Pancreas (tissue), 10 donors: ENCODE measurements at regions of chr1 and their contacts with region 1.

Region 1: GRCh38 chr1:110209715-110210603 is at the start of gene KCNC4:
- DNase-seq: peak; percentile 89 to 94 (median 92)
- ATAC-seq: peak; percentile 76 to 84 (median 80)
- H3K4me3 ChIP-seq: peak within 1 kb of the TSS; percentile 68 to 85 (median 77)
- H3K27ac ChIP-seq: peak within 1 kb of the TSS; percentile 84 to 96 (median 90)
- H3K4me1 ChIP-seq: peaks cover 33 to 41% (median 33%) of the 10 kb centered on the region in 3 donors
- H3K27me3 ChIP-seq: no peaks in the 10 kb centered on the region
- CTCF ChIP-seq: no peak
- total RNA-seq, gene KCNC4: 7.8 to 18.6 (median 10.5) TPM

Region 2: DNA sequence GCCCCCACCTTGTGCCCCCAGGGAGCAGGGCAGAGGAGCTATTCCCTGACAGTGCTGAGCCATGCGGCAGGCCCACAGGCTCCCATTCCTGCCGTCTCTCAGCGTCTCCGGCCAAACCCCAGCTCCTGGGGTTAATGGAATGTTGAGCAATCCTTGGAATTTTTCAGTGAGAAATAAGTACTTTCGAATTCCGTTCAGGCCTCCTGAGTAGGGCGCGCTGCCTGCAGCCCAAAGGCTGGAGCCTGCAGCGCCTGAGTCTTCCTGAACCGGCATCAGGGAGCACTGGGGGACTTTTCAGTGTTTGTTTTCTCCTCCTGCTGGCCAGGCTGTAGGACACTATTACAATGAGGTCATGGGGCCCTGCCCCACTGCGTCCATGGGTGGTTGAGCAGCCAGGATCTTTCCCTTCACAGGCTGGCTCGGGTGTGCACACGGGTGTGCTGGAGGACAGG is 332.6 kb before region 1 on chr1:
- intact Hi-C with region 1: no loop called
- DNase-seq: peak in 3 of 6 donors; percentile 27 to 46 (median 39)
- ATAC-seq: peak; percentile 65 to 88 (median 76)
- H3K4me3 ChIP-seq: no peak overlapping the region
- H3K27ac ChIP-seq: peak overlapping the region; percentile 61 to 80 (median 72)
- H3K4me1 ChIP-seq: no peaks in the 10 kb centered on the region
- H3K27me3 ChIP-seq: no peaks in the 10 kb centered on the region
- CTCF ChIP-seq: no peak

Region 3: DNA sequence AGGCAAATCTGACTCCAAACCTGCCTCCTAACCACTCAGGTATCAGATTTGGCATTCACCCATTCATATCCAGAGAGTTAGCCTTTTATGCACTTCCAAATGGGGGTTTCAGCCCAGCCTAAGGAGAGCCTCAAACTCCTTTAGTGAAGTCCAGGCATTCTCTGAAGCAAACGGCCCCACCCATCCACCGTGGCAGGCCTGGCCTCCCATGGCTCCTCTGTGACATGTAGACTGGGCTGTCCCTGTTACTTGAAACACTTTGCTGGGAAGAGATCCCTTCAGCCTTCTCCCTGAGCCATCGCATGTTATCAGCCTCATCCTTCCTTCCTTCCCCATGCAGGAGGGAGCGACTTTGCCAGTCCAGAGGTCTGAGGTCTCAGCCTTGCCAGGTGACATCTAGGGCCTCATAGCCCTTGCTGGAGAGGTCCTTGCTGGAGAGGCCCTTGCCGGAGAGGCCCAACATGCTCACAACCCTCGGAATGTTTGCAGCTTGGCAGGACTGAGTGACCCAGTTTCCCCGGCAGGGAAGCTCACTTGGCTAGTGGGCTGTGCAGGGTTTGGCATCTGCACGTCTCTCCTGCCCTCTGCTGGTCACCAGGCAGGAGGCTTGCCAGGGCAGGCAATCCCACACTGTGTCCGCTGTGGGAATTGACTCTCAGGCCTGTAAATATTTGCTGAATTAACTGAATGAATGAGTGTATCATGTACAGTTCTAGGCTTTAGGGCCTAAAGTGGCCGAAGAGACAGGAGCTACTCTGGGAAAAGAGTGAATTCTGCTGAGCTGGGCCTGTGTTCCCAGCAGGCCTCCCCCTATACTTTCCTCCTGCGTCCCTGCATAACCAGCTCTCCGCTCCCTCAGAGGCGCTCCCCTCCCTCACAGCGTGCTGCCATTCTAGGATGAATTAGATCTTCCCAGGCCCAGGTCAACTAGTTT is 102.5 kb after region 1 on chr1:
- intact Hi-C with region 1: loop called in 2 of 3 experiments (anchors 2 kb)
- DNase-seq: peak; percentile 71 to 91 (median 84)
- ATAC-seq: peak; percentile 96 to 98 (median 96)
- H3K4me3 ChIP-seq: no peak overlapping the region
- H3K27ac ChIP-seq: no peak overlapping the region
- H3K4me1 ChIP-seq: peaks cover 0 to 9% (median 0%) of the 10 kb centered on the region in 3 donors
- H3K27me3 ChIP-seq: no peaks in the 10 kb centered on the region
- CTCF ChIP-seq: peak; percentile 91 to 95 (median 93)

Region 4: DNA sequence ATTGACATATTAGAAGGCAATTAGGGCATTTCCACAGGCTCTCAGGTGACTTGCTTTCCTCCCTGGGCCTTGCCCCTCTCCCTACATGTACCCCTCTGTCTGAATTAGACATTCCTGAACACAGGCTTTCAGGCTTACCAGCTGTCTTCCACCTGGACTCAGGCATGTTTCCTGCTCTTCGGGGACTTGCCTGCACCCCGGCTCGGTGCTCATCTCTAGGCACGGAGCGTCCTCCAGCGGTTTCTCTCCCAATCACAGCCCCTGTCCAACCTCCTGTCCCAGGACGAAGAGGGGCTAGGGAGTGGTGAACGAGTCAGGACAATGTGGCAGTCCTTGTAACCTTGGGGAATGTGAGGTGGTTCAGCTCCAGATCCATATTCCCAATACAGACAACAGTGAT is 245.2 kb after region 1 on chr1:
- intact Hi-C with region 1: loop called in 1 of 3 experiments (anchors 10 kb)
- DNase-seq: no peak
- ATAC-seq: no peak
- H3K4me3 ChIP-seq: no peak overlapping the region
- H3K27ac ChIP-seq: no peak overlapping the region
- H3K4me1 ChIP-seq: no peaks in the 10 kb centered on the region
- H3K27me3 ChIP-seq: no peaks in the 10 kb centered on the region
- CTCF ChIP-seq: no peak

Region 5: GRCh38 chr1:110495926-110496600 is 286.1 kb after region 1 on chr1:
- intact Hi-C with region 1: loop called in 1 of 3 experiments (anchors 10 kb)
- DNase-seq: peak in 5 of 6 donors; percentile 69 to 86 (median 85)
- ATAC-seq: peak; percentile 89 to 97 (median 92)
- H3K4me3 ChIP-seq: no peak overlapping the region
- H3K27ac ChIP-seq: no peak overlapping the region
- H3K4me1 ChIP-seq: no peaks in the 10 kb centered on the region
- H3K27me3 ChIP-seq: no peaks in the 10 kb centered on the region
- CTCF ChIP-seq: peak; percentile 74 to 91 (median 86)